GM12878 (cell line): ENCODE measurements at regions of chr6 and their contacts with region 1.

Region 1: DNA sequence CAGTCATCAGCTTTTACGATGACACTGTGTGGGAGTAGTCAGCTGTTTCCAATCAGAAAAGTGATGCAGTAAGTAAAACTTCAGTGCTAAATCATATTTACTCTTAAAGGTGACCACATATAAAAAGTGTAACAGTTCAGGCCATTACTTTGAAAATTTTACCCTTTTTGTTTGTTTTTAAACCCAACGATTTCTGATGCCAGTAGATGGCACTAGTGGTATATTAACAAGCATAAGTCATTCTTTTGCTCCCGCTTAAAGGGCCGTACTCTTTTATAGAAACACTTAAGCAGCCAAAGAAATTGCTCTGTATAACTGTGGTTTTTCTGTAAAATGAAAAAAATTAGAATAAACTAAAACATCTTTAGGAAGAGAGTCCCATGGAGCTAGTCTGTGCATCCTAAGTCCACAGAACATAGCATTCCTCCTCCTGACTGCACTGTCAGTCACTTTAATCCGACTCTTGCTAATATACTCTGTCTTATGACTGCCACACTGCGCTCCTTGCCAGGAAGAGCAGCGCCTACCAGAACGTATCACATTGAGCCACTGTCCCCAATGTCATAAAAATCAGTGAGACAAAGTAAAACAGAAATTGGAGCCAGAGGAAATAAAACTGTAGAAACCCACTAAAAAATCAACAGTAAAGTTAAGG is 25.0 kb downstream of the HEBP2 start:
- DNase-seq: no peak
- ATAC-seq: peak; percentile 80
- H3K4me3 ChIP-seq: no peak overlapping the region
- H3K27ac ChIP-seq: no peak overlapping the region
- H3K4me1 ChIP-seq: no peaks in the 10 kb centered on the region
- H3K27me3 ChIP-seq: no peaks in the 10 kb centered on the region
- CTCF ChIP-seq: peak; percentile 38 to 69 (median 55); a peak in 5 of 6 replicates
- EP300 ChIP-seq: no peak
- POLR2A ChIP-seq: no peak
- RAD21 ChIP-seq: peak; percentile 81

Region 2: DNA sequence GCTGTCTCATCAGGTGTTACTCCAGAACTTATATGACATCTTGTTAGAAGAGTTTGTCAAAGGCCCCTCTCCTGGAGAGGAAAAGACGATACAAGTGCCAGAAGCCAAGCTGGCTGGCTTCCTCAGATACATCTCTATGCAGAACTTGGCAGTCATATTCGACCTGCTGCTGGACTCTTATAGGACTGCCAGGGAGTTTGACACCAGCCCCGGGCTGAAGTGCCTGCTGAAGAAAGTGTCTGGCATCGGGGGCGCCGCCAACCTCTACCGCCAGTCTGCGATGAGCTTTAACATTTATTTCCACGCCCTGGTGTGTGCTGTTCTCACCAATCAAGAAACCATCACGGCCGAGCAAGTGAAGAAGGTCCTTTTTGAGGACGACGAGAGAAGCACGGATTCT is 95.1 kb before region 1 on chr6:
- CTCF ChIA-PET with region 1: no interaction called
- POLR2A ChIA-PET with region 1: no interaction called
- RAD21 ChIA-PET with region 1: no interaction called
- SMC1A ChIA-PET with region 1: no interaction called
- in situ Hi-C with region 1: no loop called
- intact Hi-C with region 1: no loop called
- DNase-seq: no peak
- ATAC-seq: no peak
- H3K4me3 ChIP-seq: no peak overlapping the region
- H3K27ac ChIP-seq: no peak overlapping the region
- H3K4me1 ChIP-seq: no peaks in the 10 kb centered on the region
- H3K27me3 ChIP-seq: peaks cover 2 to 3% of the 10 kb centered on the region in 2 experiments
- CTCF ChIP-seq: no peak
- EP300 ChIP-seq: no peak
- POLR2A ChIP-seq: no peak
- RAD21 ChIP-seq: no peak

Region 3: GRCh38 chr6:138440758-138441357 is 11.8 kb after region 1 on chr6:
- CTCF ChIA-PET with region 1: interaction called, 24 read pairs
- POLR2A ChIA-PET with region 1: no interaction called
- RAD21 ChIA-PET with region 1: interaction called, 5 read pairs
- SMC1A ChIA-PET with region 1: interaction called, 20 read pairs
- in situ Hi-C with region 1: no loop called
- intact Hi-C with region 1: no loop called
- DNase-seq: no peak
- ATAC-seq: peak; percentile 62
- H3K4me3 ChIP-seq: no peak overlapping the region
- H3K27ac ChIP-seq: no peak overlapping the region
- H3K4me1 ChIP-seq: no peaks in the 10 kb centered on the region
- H3K27me3 ChIP-seq: no peaks in the 10 kb centered on the region
- CTCF ChIP-seq: no peak
- EP300 ChIP-seq: no peak
- POLR2A ChIP-seq: no peak
- RAD21 ChIP-seq: no peak

Region 4: DNA sequence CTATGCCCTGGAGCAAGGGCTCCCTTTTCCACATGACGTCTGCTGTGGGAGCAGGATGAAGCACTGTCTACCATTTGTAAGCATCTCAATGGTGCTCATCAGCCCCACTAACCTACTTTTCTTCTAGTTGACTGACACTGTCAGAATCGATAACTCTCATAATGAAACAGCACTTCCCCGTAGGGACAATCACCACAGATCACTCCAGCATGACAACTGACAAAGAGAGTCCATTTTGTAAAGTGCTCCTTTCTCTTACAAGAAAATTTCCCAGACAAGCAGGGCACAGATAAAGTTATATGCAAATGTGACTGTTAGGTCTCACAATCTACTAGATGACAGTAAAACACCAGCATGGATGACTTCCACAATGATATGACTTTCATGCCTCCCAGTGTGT is 21.4 kb after region 1 on chr6:
- CTCF ChIA-PET with region 1: interaction called, 9 read pairs
- POLR2A ChIA-PET with region 1: interaction called, 3 read pairs
- RAD21 ChIA-PET with region 1: interaction called, 9 read pairs
- SMC1A ChIA-PET with region 1: interaction called, 20 read pairs
- in situ Hi-C with region 1: no loop called
- intact Hi-C with region 1: no loop called
- DNase-seq: peak; percentile 23
- ATAC-seq: peak; percentile 81
- H3K4me3 ChIP-seq: no peak overlapping the region
- H3K27ac ChIP-seq: no peak overlapping the region
- H3K4me1 ChIP-seq: peaks cover 9% of the 10 kb centered on the region
- H3K27me3 ChIP-seq: no peaks in the 10 kb centered on the region
- CTCF ChIP-seq: no peak
- EP300 ChIP-seq: peak; percentile 22 to 46; a peak in 2 of 4 replicates
- POLR2A ChIP-seq: no peak
- RAD21 ChIP-seq: no peak

Region 5: GRCh38 chr6:138517635-138518034 is 88.6 kb after region 1 on chr6:
- CTCF ChIA-PET with region 1: interaction called, 387 read pairs
- POLR2A ChIA-PET with region 1: no interaction called
- RAD21 ChIA-PET with region 1: interaction called, 202 read pairs
- SMC1A ChIA-PET with region 1: interaction called, 14 read pairs
- in situ Hi-C with region 1: loop called (anchors 5 kb)
- intact Hi-C with region 1: no loop called
- DNase-seq: no peak
- ATAC-seq: peak; percentile 77
- H3K4me3 ChIP-seq: no peak overlapping the region
- H3K27ac ChIP-seq: no peak overlapping the region
- H3K4me1 ChIP-seq: no peaks in the 10 kb centered on the region; the same call in 1 of the 2 replicates
- H3K27me3 ChIP-seq: 0 out of 4 replicates have a peak, but pooled peaks cover 0 to 2% of the 10 kb centered on the region in 2 experiments
- CTCF ChIP-seq: peak; percentile 47 to 80 (median 75)
- EP300 ChIP-seq: no peak
- POLR2A ChIP-seq: no peak
- RAD21 ChIP-seq: peak; percentile 63